ENCODE measurements at regions of chr18 and their contacts with region 1.

Region 1: DNA sequence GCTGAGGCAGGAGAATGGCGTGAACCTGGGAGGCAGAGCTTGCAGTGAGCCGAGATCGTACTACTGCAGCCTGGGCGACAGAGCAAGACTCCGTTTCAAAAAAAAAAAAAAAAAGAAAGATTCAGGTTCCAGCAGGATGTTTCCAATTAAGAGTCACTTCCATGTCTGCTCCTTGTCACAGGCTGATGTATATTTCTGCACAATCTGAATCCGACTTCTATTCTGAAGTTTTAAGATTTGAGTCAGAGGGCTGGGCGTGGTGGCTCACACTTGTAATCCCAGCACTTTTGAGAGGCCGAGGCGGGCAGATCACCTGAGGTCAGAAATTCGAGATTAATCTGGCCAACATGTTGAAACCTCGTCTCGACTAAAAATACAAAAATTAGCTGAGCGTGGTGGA is 24.7 kb downstream of the SNRPD1 start:
- DNase-seq: no peak
- ATAC-seq: no peak
- H3K4me3 ChIP-seq: no peak overlapping the region
- H3K27ac ChIP-seq: no peak overlapping the region
- H3K4me1 ChIP-seq: no peaks in the 10 kb centered on the region
- H3K27me3 ChIP-seq: no peaks in the 10 kb centered on the region
- CTCF ChIP-seq: no peak

Region 2: GRCh38 chr18:21452796-21453510 is 183.8 kb before region 1 on chr18:
- intact Hi-C with region 1: no loop called
- DNase-seq: no peak
- ATAC-seq: no peak
- H3K4me3 ChIP-seq: no peak overlapping the region
- H3K27ac ChIP-seq: no peak overlapping the region
- H3K4me1 ChIP-seq: no peaks in the 10 kb centered on the region
- H3K27me3 ChIP-seq: no peaks in the 10 kb centered on the region
- CTCF ChIP-seq: no peak

Region 3: GRCh38 chr18:21513292-21513691 is 123.5 kb before region 1 on chr18:
- intact Hi-C with region 1: no loop called
- DNase-seq: no peak
- ATAC-seq: no peak
- H3K4me3 ChIP-seq: no peak overlapping the region
- H3K27ac ChIP-seq: no peak overlapping the region
- H3K4me1 ChIP-seq: no peaks in the 10 kb centered on the region
- H3K27me3 ChIP-seq: no peaks in the 10 kb centered on the region
- CTCF ChIP-seq: no peak

Region 4: GRCh38 chr18:21584391-21584790 is 52.4 kb before region 1 on chr18:
- intact Hi-C with region 1: loop called in 1 of 3 experiments (anchors 10 kb)
- DNase-seq: no peak
- ATAC-seq: no peak
- H3K4me3 ChIP-seq: no peak overlapping the region
- H3K27ac ChIP-seq: no peak overlapping the region
- H3K4me1 ChIP-seq: no peaks in the 10 kb centered on the region
- H3K27me3 ChIP-seq: no peaks in the 10 kb centered on the region
- CTCF ChIP-seq: no peak

Region 5: DNA sequence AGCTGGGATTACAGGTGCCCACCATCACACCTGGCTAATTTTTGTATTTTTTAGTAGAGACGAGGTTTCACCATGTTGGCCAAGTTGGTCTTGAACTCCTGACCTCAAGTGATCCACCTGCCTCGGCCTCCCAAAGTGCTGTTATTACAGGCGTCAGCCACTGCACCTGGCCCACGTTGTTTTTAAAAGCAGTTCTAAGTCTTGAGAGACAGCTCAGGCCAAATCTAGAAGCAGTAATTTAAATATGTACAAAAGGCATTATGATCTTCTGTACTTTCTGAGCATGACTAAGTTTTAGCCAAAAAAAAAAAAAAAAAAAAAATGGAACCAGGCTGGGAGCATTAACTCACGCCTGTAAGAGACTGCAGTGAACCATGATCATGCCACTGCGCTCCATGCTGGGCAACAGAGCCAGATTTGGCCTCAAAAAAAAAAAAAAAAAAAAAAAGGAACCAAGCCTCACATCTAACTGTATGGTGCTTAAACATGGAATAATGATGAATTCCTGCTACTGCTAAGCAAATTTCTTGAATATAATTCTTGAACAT is 63.8 kb after region 1 on chr18:
- intact Hi-C with region 1: no loop called
- DNase-seq: no peak
- ATAC-seq: no peak
- H3K4me3 ChIP-seq: no peak overlapping the region
- H3K27ac ChIP-seq: no peak overlapping the region
- H3K4me1 ChIP-seq: peaks cover 0 to 4% (median 0%) of the 10 kb centered on the region in 3 donors
- H3K27me3 ChIP-seq: no peaks in the 10 kb centered on the region
- CTCF ChIP-seq: no peak

Measured in pancreas (tissue), 10 donors.